SK-N-SH (cell line): ENCODE measurements at regions of chr6 and their contacts with region 1.

Region 1: GRCh38 chr6:2846873-2847224 is 5.2 kb upstream of the SERPINB1 start:
- DNase-seq: no peak
- H3K4me3 ChIP-seq: peak overlapping the region in 1 of 2 experiments; percentile 28; a peak in 1 of 4 replicates
- H3K27ac ChIP-seq: peak overlapping the region; percentile 63 to 67; a peak in 3 of 4 replicates
- H3K4me1 ChIP-seq: peaks cover 0 to 9% of the 10 kb centered on the region in 2 experiments; a peak in 2 of 4 replicates
- H3K27me3 ChIP-seq: no peaks in the 10 kb centered on the region
- CTCF ChIP-seq: no peak
- EP300 ChIP-seq: no peak
- RAD21 ChIP-seq: no peak

Region 2: DNA sequence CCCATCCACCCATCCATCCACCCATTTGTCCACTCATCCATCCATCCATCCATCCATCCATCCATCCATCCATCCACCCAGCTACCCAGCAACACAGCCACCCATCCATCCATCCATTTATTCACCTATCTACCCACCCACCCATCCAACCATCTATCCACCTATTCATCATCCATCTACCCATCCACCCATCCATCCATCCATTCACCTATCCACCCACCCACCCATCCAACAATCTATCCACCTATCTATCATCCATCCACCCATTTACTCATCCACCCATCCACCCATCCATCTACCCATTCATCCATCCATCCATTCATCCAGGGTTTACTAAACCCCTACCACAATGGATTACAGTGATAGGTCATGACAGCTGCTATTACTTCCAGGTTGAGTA is 12.6 kb before region 1 on chr6:
- CTCF ChIA-PET with region 1: interaction called, 10 read pairs
- POLR2A ChIA-PET with region 1: no interaction called
- DNase-seq: no peak
- H3K4me3 ChIP-seq: no peak overlapping the region
- H3K27ac ChIP-seq: no peak overlapping the region
- H3K4me1 ChIP-seq: peaks cover 0 to 7% of the 10 kb centered on the region in 2 experiments; a peak in 1 of 4 replicates
- H3K27me3 ChIP-seq: no peaks in the 10 kb centered on the region
- CTCF ChIP-seq: no peak
- EP300 ChIP-seq: no peak
- RAD21 ChIP-seq: no peak

Region 3: GRCh38 chr6:2857580-2858337 is 10.9 kb after region 1 on chr6:
- CTCF ChIA-PET with region 1: interaction called, 24 read pairs
- POLR2A ChIA-PET with region 1: no interaction called
- DNase-seq: peak; percentile 70
- H3K4me3 ChIP-seq: no peak overlapping the region
- H3K27ac ChIP-seq: peak overlapping the region; percentile 51 to 91
- H3K4me1 ChIP-seq: peaks cover 18 to 26% of the 10 kb centered on the region in 2 experiments; a peak in 2 of 4 replicates
- H3K27me3 ChIP-seq: no peaks in the 10 kb centered on the region
- CTCF ChIP-seq: no peak
- EP300 ChIP-seq: no peak
- RAD21 ChIP-seq: no peak

Region 4: DNA sequence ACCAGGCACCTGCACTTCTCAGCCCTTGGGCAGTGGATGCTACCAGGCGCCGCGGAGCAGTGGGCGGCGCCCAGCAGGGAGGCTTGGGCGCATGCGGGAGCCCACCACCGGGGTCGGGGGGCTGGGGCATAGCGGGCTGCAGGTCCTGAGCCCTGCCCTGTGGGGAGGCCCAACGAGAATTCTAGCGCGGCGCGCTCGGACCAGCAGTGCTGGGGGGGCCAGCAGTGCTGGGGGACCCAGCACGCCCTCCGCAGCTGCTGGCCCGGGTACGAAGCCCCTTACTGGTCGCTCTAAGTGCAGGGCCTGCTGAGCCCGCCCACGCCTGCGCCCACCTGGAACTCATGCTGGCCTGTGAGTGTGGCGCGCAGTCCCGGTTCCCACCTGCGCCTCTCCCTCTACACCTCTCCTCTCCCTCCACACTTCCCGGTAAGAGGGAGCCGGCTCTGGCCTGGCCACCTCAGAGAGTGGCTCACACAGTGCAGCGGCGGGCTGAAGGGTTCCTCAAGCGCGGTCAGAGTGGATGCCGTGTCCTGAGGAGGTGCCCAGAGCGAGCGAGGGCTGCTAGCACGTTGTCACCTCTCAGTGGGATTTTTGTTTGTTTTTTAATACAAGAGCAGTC is 23.3 kb after region 1 on chr6:
- CTCF ChIA-PET with region 1: interaction called, 12 read pairs
- POLR2A ChIA-PET with region 1: no interaction called
- DNase-seq: no peak
- H3K4me3 ChIP-seq: no peak overlapping the region
- H3K27ac ChIP-seq: no peak overlapping the region
- H3K4me1 ChIP-seq: no peaks in the 10 kb centered on the region; a peak in 1 of 4 replicates
- H3K27me3 ChIP-seq: no peaks in the 10 kb centered on the region
- CTCF ChIP-seq: no peak
- EP300 ChIP-seq: no peak
- RAD21 ChIP-seq: no peak

Region 5: GRCh38 chr6:2900821-2901644 is 54.2 kb after region 1 on chr6:
- CTCF ChIA-PET with region 1: interaction called, 11 read pairs
- POLR2A ChIA-PET with region 1: no interaction called
- DNase-seq: no peak
- H3K4me3 ChIP-seq: no peak overlapping the region
- H3K27ac ChIP-seq: no peak overlapping the region
- H3K4me1 ChIP-seq: peaks cover 0 to 8% of the 10 kb centered on the region in 2 experiments; a peak in 1 of 4 replicates
- H3K27me3 ChIP-seq: no peaks in the 10 kb centered on the region; the same call in 1 of the 2 replicates
- CTCF ChIP-seq: no peak
- EP300 ChIP-seq: no peak
- RAD21 ChIP-seq: no peak

Region 6: DNA sequence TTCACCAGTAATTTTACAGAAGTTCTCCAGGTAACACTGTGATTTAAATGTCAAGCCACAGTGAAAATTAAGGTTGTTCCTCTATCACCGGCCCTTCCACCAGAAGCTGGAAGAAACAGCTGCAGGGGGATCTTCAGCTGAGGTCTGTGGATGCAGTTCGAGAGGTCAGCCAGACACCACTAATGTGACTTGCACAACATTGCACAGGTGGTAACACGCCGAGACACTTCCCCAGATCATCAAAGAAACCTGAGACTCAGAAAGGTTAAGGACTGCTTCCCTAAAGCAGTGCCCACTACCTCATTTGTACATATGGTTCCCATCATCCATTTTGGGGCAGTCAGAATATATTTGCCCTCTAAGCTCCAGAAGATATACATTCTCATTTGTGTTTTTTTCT is 64.3 kb after region 1 on chr6:
- CTCF ChIA-PET with region 1: interaction called, 22 read pairs
- POLR2A ChIA-PET with region 1: no interaction called
- DNase-seq: no peak
- H3K4me3 ChIP-seq: no peak overlapping the region
- H3K27ac ChIP-seq: no peak overlapping the region
- H3K4me1 ChIP-seq: peaks cover 0 to 17% of the 10 kb centered on the region in 2 experiments; a peak in 1 of 4 replicates
- H3K27me3 ChIP-seq: no peaks in the 10 kb centered on the region; the same call in none of the 2 replicates
- CTCF ChIP-seq: no peak
- EP300 ChIP-seq: no peak
- RAD21 ChIP-seq: no peak

Region 7: DNA sequence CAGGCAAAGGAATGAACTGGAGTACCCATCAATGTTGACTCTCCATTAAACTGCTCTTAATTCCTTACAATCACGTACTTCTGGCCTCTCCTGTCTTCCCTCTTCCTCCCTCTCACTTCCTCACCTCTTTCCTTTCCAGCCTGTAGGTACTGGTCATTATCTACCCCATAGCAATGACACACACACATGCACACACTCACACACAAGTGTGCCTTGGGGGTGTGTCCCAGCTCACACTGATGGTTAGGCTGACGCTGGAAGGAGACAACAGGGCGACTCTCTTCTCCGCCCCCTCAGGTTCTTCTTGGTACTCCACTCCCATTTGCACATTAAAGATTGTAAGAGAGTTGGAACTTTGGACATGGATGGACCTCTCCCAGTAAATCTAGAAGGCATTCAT is 70.2 kb after region 1 on chr6:
- CTCF ChIA-PET with region 1: interaction called, 22 read pairs
- POLR2A ChIA-PET with region 1: no interaction called
- DNase-seq: no peak
- H3K4me3 ChIP-seq: no peak overlapping the region
- H3K27ac ChIP-seq: no peak overlapping the region
- H3K4me1 ChIP-seq: no peaks in the 10 kb centered on the region
- H3K27me3 ChIP-seq: no peaks in the 10 kb centered on the region; the same call in 1 of the 2 replicates
- CTCF ChIP-seq: no peak; the same call in 1 of the 2 replicates
- EP300 ChIP-seq: no peak
- RAD21 ChIP-seq: no peak